ENCODE measurements at regions of chr6 and their contacts with region 1.

Region 1: DNA sequence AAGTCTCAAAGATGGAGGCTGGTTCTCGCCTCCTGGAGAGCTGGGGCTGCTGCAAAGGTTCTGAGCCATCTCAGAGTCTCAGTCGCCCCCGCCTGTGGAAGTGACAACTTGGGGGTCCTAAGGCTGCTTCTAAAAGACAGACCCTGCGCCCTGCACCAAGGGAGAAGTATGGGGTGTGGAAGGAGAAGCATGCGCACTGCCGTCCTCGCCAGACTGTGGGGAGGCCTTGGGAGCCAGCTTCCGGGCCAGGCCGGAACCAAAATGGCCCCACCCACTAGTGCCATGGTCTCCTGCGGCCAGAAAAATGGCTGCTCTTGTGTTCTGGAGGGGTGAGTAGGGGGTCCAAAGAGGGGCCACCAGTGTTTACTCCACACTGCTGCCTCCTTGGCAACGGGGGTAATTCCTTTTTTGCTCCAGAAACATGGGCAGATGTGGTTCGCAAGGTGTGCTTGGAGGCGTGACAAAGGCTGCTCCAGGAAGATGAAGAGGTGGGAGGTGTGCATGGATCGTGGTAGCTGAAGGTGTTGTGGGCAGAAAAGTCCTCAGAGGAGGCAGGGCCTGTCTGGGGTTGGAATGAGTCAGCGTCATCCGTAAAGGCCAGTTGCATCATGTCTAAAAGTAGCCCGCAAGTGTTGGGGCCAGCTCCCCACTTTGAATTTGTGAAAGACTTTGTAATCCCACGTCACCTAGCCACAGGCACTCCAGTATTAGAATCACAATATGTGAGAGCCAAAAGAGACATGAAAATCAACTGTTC is 329.8 kb upstream of the SOX4 start:
- DNase-seq: no peak
- H3K4me3 Mint-ChIP-seq: no peak overlapping the region
- H3K27ac Mint-ChIP-seq: no peak overlapping the region
- H3K4me1 Mint-ChIP-seq: peaks cover 26% of the 10 kb centered on the region
- H3K27me3 Mint-ChIP-seq: no peaks in the 10 kb centered on the region

Region 2: DNA sequence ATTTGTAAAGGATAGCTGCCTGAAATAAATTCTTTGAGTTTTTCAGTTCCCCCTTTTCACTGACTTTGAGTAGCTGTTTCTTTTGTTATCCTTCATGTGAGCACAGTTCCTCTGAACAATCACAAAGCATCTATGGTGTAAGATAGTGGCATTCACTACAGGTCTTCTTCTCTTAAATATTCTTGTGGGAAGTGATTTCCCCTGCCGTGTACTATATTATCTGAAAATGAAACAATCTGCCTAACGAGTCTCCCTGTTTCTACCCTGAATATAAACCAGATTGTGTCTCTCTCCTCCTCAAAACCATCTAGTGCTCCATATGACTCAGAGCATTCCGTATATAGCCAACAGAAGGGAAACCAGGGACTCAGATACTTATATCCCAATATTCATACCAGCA is 50.2 kb before region 1 on chr6:
- intact Hi-C with region 1: loop called (anchors 1 kb)
- DNase-seq: no peak
- H3K4me3 Mint-ChIP-seq: no peak overlapping the region
- H3K27ac Mint-ChIP-seq: no peak overlapping the region
- H3K4me1 Mint-ChIP-seq: peaks cover 3% of the 10 kb centered on the region
- H3K27me3 Mint-ChIP-seq: no peaks in the 10 kb centered on the region

Region 3: DNA sequence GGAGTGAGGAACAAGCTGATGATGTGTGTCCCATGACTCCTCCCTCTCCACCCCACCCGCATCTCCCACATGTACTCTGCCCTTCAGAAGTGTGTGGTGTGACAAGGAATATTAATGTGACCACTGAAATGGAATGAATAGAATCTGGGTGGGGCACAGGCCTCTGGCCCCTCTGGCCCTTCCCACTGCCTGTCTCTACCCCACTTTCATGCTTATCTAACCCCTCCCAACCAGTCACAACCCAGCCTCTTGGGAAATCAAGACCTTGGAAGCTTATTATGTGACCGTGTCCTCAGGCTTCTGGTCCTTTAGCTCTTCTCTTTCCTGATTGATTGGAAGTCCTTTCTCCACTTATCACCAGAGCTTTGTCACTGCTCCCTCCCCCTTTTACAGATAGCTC is 17.7 kb after region 1 on chr6:
- intact Hi-C with region 1: no loop called
- DNase-seq: no peak
- H3K4me3 Mint-ChIP-seq: no peak overlapping the region
- H3K27ac Mint-ChIP-seq: no peak overlapping the region
- H3K4me1 Mint-ChIP-seq: no peaks in the 10 kb centered on the region
- H3K27me3 Mint-ChIP-seq: peaks cover 2% of the 10 kb centered on the region

Region 4: DNA sequence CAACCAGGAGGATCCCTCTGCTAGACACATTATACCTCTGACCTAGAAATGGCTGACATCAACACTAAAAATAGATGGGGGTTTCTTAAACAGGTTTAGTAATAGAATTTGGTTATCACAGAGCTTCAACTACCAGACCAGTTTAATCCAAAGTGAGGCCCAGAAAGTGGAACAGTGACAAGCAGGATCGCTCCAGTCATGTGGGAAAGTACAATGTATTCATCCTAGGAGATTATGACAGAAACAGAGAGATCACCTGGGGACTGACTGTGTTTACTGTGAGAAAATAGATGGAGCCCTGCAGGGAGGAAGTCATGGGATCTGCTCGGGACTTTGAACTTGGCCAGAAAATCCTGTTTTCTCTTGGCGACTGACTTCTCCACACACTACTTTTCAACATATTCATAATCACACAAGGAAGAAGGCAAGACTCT is 91.1 kb after region 1 on chr6:
- intact Hi-C with region 1: no loop called
- DNase-seq: no peak
- H3K4me3 Mint-ChIP-seq: no peak overlapping the region
- H3K27ac Mint-ChIP-seq: no peak overlapping the region
- H3K4me1 Mint-ChIP-seq: no peaks in the 10 kb centered on the region
- H3K27me3 Mint-ChIP-seq: no peaks in the 10 kb centered on the region